Gastrocnemius medialis (tissue), 4 donors: ENCODE measurements at regions of chr6 and their contacts with region 1.

Region 1: GRCh38 chr6:27893059-27893835 is 18.9 kb downstream of the OR2B2 start:
- DNase-seq: peak in 1 of 2 donors; percentile 56
- ATAC-seq: peak; percentile 47 to 62
- H3K4me3 ChIP-seq: peak overlapping the region; percentile 66 to 77 (median 70)
- H3K27ac ChIP-seq: peak overlapping the region in 3 of 4 donors; percentile 36 to 52 (median 49)
- H3K4me1 ChIP-seq: peaks cover 15 to 32% of the 10 kb centered on the region in 2 donors
- H3K27me3 ChIP-seq: peaks cover 47 to 56% (median 48%) of the 10 kb centered on the region in 3 donors
- CTCF ChIP-seq: no peak
- POLR2A ChIP-seq: peak; percentile 45 to 65

Region 2: GRCh38 chr6:27126815-27127537 is 766.3 kb before region 1 on chr6:
- in situ Hi-C with region 1: no loop called
- intact Hi-C with region 1: loop called (anchors 2 kb)
- DNase-seq: peak; percentile 68 to 73
- ATAC-seq: peak; percentile 82
- H3K4me3 ChIP-seq: peak overlapping the region; percentile 21 to 44 (median 36)
- H3K27ac ChIP-seq: peak overlapping the region in 2 of 4 donors; percentile 18 to 46
- H3K4me1 ChIP-seq: peaks cover under 1 to 4% of the 10 kb centered on the region in 2 donors
- H3K27me3 ChIP-seq: no peaks in the 10 kb centered on the region
- CTCF ChIP-seq: peak; percentile 37 to 85 (median 61)
- POLR2A ChIP-seq: no peak

Region 3: GRCh38 chr6:27472617-27473400 is 420.4 kb before region 1 on chr6 and contains the start of gene ZNF184:
- in situ Hi-C with region 1: loop called in 2 of 4 experiments (anchors 10 kb)
- intact Hi-C with region 1: no loop called
- DNase-seq: peak; percentile 88 to 93
- ATAC-seq: peak; percentile 97 to 99
- H3K4me3 ChIP-seq: peak within 1 kb of the TSS; percentile 62 to 98 (median 85)
- H3K27ac ChIP-seq: peak within 1 kb of the TSS; percentile 87 to 97 (median 95)
- H3K4me1 ChIP-seq: peaks cover 13 to 20% of the 10 kb centered on the region in 2 donors
- H3K27me3 ChIP-seq: no peaks in the 10 kb centered on the region
- CTCF ChIP-seq: peak in 1 of 5 experiments; percentile 4
- POLR2A ChIP-seq: peak; percentile 77
- total RNA-seq, gene ZNF184: 3.9 to 6.0 (median 4.4) TPM

Region 4: GRCh38 chr6:27761391-27761790 is 131.9 kb before region 1 on chr6:
- in situ Hi-C with region 1: loop called in 2 of 4 experiments (anchors 10 to 25 kb)
- intact Hi-C with region 1: no loop called
- DNase-seq: no peak
- ATAC-seq: no peak
- H3K4me3 ChIP-seq: no peak overlapping the region
- H3K27ac ChIP-seq: no peak overlapping the region
- H3K4me1 ChIP-seq: no peaks in the 10 kb centered on the region
- H3K27me3 ChIP-seq: peaks cover 20 to 47% (median 36%) of the 10 kb centered on the region in 3 donors
- CTCF ChIP-seq: no peak
- POLR2A ChIP-seq: no peak

Region 5: DNA sequence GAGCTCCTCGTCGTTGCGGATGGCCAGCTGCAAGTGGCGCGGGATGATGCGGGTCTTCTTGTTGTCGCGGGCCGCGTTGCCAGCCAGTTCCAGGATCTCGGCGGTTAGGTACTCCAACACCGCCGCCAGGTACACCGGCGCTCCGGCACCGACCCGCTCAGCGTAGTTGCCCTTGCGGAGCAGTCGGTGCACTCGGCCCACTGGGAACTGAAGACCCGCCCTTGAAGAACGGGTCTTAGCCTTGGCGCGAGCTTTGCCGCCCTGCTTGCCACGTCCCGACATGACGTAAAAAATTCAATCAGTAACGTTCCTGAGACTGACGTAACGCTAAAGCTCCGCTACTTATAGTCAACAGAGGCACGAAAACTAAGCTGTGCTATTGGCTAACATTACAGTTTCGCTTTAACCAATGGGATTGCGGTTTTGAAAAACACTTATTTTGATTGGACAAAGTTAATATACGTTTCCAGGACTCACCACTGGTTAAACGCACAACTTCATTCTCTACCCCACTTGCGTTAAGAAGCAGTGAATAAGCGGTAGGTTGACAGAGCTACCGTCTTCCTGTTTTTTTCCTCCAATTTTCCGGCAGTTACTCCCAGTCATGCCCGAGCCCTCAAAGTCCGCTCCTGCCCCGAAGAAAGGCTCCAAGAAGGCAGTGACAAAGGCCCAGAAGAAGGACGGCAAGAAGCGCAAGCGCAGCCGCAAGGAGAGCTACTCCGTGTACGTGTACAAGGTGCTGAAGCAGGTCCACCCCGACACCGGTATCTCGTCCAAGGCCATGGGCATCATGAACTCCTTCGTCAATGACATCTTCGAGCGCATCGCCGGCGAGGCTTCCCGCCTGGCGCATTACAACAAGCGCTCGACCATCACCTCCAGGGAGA is 54.9 kb before region 1 on chr6:
- in situ Hi-C with region 1: no loop called
- intact Hi-C with region 1: loop called (anchors 2 kb)
- DNase-seq: peak; percentile 52 to 60
- ATAC-seq: peak; percentile 99
- H3K4me3 ChIP-seq: peak overlapping the region; percentile 75 to 91 (median 76)
- H3K27ac ChIP-seq: peak overlapping the region; percentile 89 to 94 (median 93)
- H3K4me1 ChIP-seq: peaks cover 21 to 33% of the 10 kb centered on the region in 2 donors
- H3K27me3 ChIP-seq: no peaks in the 10 kb centered on the region
- CTCF ChIP-seq: peak in 2 of 5 experiments; percentile 7 to 14
- POLR2A ChIP-seq: peak; percentile 81 to 94